ENCODE measurements at regions of chr7 and their contacts with region 1.

Region 1: GRCh38 chr7:128122576-128123290 is 91.5 kb upstream of the LRRC4 start:
- DNase-seq: no peak
- H3K4me3 Mint-ChIP-seq: no peak overlapping the region
- H3K27ac Mint-ChIP-seq: no peak overlapping the region
- H3K4me1 Mint-ChIP-seq: peaks cover 6% of the 10 kb centered on the region
- H3K27me3 Mint-ChIP-seq: peaks cover 9% of the 10 kb centered on the region

Region 2: GRCh38 chr7:128010394-128011127 is 112.2 kb before region 1 on chr7:
- CTCF ChIA-PET with region 1: no interaction called
- POLR2A ChIA-PET with region 1: no interaction called
- DNase-seq: no peak
- H3K4me3 Mint-ChIP-seq: no peak overlapping the region
- H3K27ac Mint-ChIP-seq: no peak overlapping the region
- H3K4me1 Mint-ChIP-seq: no peaks in the 10 kb centered on the region
- H3K27me3 Mint-ChIP-seq: no peaks in the 10 kb centered on the region

Region 3: GRCh38 chr7:128135515-128136214 is 12.9 kb after region 1 on chr7:
- CTCF ChIA-PET with region 1: interaction called, 12 read pairs
- POLR2A ChIA-PET with region 1: no interaction called
- DNase-seq: peak; percentile 46
- H3K4me3 Mint-ChIP-seq: peak overlapping the region; percentile 67
- H3K27ac Mint-ChIP-seq: no peak overlapping the region
- H3K4me1 Mint-ChIP-seq: peaks cover 13% of the 10 kb centered on the region
- H3K27me3 Mint-ChIP-seq: peaks cover 56% of the 10 kb centered on the region

Measured in activated CD4-positive, alpha-beta T cell treated with anti-CD3 and anti-CD28 coated beads, Interleukin-2, amount 10 ng/mL, durations not matched to agents 7 days and 5 days (primary cell).